ENCODE measurements at regions of chr2 and their contacts with region 1.

Region 1: DNA sequence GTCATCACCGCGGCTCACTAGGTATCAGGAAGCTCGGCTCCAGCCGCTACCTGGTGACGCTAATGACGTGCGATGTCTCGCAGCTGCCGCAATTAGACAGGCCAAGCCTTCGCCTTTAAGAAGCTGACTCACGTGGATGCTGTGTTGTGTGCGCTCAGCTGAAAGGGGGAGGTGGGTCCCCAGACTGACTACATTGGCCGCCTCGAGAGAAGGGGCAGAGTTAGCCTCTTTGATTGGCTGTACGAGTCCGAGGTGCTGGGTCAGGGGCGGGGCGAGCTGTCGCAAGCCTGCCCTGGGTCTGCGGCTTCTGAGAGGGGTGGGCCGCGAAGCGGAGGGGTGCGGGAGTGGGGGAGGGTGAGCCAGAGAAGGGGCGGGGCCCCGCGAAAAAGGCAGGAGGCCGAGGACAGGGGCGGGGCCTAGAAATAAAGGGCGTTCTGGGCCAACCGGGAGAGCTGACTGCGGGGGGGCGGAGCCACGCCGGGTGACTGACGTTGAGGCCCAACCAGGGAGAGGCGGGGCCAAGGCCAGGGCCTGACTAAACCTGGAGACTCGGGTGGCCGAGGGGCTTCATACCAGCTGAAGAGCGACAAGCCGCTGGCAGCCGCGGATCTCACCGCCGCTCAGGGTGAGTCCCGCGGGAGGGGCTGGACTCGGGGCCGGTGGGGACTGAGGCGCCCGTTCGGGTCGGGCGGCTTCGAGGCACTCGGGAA is at the start of gene YPEL5:
- DNase-seq: peak; percentile 99
- H3K4me3 Mint-ChIP-seq: peak within 1 kb of the TSS; percentile 84
- H3K27ac Mint-ChIP-seq: peak within 1 kb of the TSS; percentile 95
- H3K4me1 Mint-ChIP-seq: peaks cover 56% of the 10 kb centered on the region
- H3K27me3 Mint-ChIP-seq: no peaks in the 10 kb centered on the region
- total RNA-seq, gene YPEL5: 28.4 to 33.3 TPM

Region 2: GRCh38 chr2:28621172-28622100 is 1525.2 kb before region 1 on chr2:
- CTCF ChIA-PET with region 1: no interaction called
- intact Hi-C with region 1: loop called (anchors 2 kb)
- DNase-seq: peak; percentile 91
- H3K4me3 Mint-ChIP-seq: peak overlapping the region; percentile 41
- H3K27ac Mint-ChIP-seq: peak overlapping the region; percentile 94
- H3K4me1 Mint-ChIP-seq: peaks cover 92% of the 10 kb centered on the region
- H3K27me3 Mint-ChIP-seq: no peaks in the 10 kb centered on the region

Region 3: DNA sequence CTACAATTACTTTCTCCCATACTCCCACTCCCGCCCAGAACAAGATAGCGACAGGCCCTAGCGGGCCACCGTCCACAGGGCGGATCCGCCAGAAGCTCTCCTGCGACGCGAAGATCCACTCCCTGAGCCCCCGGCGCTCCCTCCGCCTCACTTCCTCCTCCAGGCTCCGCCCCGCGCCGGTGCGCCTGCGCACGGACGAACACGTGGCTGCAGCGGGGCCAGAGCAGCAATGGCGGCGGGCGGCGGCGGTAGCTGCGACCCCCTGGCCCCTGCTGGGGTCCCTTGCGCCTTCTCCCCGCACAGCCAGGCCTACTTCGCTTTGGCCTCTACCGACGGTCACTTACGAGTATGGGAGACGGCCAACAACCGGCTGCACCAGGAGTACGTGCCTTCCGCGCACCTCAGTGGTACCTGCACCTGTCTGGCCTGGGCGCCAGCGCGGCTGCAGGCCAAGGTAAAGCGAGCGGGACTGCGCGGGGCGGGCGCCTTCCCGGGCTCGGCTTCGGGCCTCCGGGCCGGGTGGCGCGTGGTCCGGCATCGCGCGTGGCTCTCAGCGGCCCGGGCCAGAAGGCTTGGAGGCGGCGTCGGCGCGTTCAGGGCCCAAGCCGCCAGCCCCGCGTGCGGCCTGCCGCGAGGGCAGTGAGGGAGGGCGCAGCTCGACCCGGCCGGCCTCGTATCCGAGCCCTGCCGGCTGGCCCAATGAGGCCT is 1252.0 kb before region 1 on chr2 and contains the start of gene WDR43:
- CTCF ChIA-PET with region 1: no interaction called
- intact Hi-C with region 1: loop called (anchors 2 kb)
- DNase-seq: peak; percentile 97
- H3K4me3 Mint-ChIP-seq: peak within 1 kb of the TSS; percentile 100
- H3K27ac Mint-ChIP-seq: peak within 1 kb of the TSS; percentile 97
- H3K4me1 Mint-ChIP-seq: peaks cover 34% of the 10 kb centered on the region
- H3K27me3 Mint-ChIP-seq: no peaks in the 10 kb centered on the region
- total RNA-seq, gene WDR43: 76.5 to 78.7 TPM

Region 4: GRCh38 chr2:30225131-30225762 is 78.7 kb after region 1 on chr2:
- CTCF ChIA-PET with region 1: interaction called, 4 read pairs
- intact Hi-C with region 1: loop called (anchors 1 kb)
- DNase-seq: peak; percentile 60
- H3K4me3 Mint-ChIP-seq: peak overlapping the region; percentile 81
- H3K27ac Mint-ChIP-seq: peak overlapping the region; percentile 87
- H3K4me1 Mint-ChIP-seq: peaks cover 64% of the 10 kb centered on the region
- H3K27me3 Mint-ChIP-seq: peaks cover 3% of the 10 kb centered on the region

Region 5: DNA sequence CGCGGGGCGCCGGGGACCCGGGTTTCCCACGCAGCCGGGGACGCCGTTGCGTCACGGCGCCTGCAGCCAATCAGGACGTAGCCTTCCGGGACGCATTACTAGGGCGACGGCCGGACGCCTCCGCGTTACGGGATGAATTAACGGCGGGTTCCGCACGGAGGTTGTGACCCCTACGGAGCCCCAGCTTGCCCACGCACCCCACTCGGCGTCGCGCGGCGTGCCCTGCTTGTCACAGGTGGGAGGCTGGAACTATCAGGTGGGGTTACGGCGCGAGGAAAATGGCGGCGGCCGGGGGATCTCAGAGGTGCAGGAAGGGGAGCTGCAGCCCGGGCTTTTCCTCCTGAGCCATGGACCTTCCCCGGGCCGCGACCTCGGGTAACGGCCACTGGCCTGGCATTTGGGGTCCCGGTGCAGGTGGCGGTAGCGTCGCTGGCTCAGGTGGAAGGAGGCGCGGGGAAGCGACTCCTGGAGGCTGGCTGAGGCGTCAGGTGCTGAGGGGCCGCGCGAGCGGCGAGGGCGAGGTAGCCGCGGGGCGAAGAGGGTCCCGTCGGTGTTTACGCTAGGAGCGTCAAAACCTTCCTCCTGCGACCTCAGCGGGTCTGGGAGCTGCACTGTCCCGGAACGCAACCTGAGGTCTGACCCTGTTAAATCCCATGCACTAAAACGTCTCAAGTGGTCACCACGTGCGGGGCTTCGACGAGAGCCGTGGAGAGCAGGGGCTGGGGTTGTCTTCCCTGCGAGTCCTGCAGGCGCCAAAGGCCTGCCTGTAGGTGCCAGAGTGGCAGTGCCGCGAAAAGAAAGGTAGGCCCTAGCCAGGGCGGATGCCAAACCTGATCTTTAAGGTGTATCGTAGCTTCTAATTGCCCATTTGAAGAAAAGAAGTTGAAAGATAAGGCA is 300.8 kb after region 1 on chr2 and contains the start of gene LCLAT1:
- CTCF ChIA-PET with region 1: no interaction called
- intact Hi-C with region 1: loop called (anchors 2 kb)
- DNase-seq: peak; percentile 86
- H3K4me3 Mint-ChIP-seq: peak within 1 kb of the TSS; percentile 90
- H3K27ac Mint-ChIP-seq: peak within 1 kb of the TSS; percentile 95
- H3K4me1 Mint-ChIP-seq: peaks cover 40% of the 10 kb centered on the region
- H3K27me3 Mint-ChIP-seq: no peaks in the 10 kb centered on the region
- total RNA-seq, gene LCLAT1: 18.8 to 22.8 TPM

Measured in activated naive CD4-positive, alpha-beta T cell treated with anti-CD3 and anti-CD28 coated beads for 36 hours (primary cell).